ENCODE measurements at regions of chr17 and their contacts with region 1.

Region 1: DNA sequence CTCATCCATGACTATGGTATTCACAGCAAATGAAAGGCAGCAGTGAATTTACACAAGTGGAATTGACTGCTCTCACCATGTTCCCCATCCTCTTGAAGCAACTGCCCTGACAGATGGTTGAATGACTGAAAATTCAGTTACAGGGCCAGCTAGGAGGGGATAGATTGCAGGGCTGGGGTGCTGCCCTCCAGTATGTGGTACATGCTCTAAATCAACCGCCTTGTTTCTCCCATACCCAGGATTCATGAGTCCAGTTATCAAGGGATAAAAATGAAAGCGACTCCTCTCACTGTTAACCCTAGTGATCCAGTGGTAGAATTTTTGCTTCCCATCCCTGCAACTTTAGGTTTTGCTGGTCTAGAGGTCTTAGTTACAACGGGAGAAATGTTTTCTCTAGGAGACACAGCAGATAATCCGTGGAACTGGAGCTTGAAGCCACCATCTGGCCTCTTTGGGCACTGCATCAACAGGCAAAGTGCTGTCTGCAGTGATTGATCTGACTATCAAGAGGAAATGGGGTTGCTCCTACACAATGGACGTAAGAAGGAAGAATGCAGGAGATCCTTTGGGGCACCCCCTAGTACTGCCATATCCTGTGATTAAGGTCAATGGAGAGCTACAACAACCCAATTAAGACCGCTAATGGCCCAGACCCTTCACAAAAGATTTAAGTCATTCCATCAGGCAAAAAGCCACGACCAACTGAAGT is 32.0 kb downstream of the SCPEP1 start:
- DNase-seq: peak; percentile 19 to 61
- ATAC-seq: peak in 3 of 4 donors; percentile 67 to 88 (median 75)
- H3K4me3 ChIP-seq: no peak overlapping the region
- H3K27ac ChIP-seq: no peak overlapping the region
- H3K4me1 ChIP-seq: no peaks in the 10 kb centered on the region
- H3K27me3 ChIP-seq: no peaks in the 10 kb centered on the region
- CTCF ChIP-seq: peak; percentile 67

Region 2: GRCh38 chr17:57044976-57045867 is 35.3 kb after region 1 on chr17:
- intact Hi-C with region 1: loop called (anchors 5 kb)
- DNase-seq: peak in 1 of 2 donors; percentile 52
- ATAC-seq: peak; percentile 14 to 60 (median 22)
- H3K4me3 ChIP-seq: peak overlapping the region; percentile 62
- H3K27ac ChIP-seq: no peak overlapping the region
- H3K4me1 ChIP-seq: peaks cover 4% of the 10 kb centered on the region
- H3K27me3 ChIP-seq: peaks cover 0 to 10% (median 0%) of the 10 kb centered on the region in 3 donors
- CTCF ChIP-seq: no peak

Region 3: DNA sequence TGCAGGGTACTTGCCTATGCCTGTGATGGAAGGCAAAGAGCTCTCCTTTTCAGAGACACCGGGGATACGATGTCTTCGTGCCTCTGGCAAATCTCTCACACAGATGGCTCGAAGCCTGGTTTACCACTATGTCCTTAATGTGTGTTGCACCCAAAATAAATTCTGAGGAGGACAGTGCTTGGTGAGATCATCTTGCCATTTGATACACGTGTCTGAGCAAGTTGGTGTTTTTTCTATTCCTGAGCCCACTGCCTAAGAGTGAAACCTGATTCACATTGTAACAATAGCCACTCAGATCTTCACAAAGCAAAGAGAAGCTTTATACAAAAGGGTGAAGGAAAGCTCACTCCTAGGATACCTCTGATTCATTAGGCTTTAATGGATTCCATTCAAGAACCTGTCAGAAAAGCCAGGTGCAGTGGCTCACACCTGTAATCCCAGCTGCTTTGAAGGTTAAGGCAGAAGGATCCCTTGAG is 42.0 kb after region 1 on chr17:
- intact Hi-C with region 1: loop called in 1 of 2 experiments (anchors 5 kb)
- DNase-seq: peak in 1 of 2 donors; percentile 72
- ATAC-seq: peak; percentile 90 to 92 (median 92)
- H3K4me3 ChIP-seq: no peak overlapping the region
- H3K27ac ChIP-seq: peak overlapping the region; percentile 82
- H3K4me1 ChIP-seq: peaks cover 29% of the 10 kb centered on the region
- H3K27me3 ChIP-seq: no peaks in the 10 kb centered on the region
- CTCF ChIP-seq: no peak

Region 4: GRCh38 chr17:57084802-57085447 is 75.0 kb after region 1 on chr17 and contains the start of gene AKAP1:
- intact Hi-C with region 1: no loop called
- DNase-seq: peak; percentile 97 to 98
- ATAC-seq: peak; percentile 92 to 96 (median 92)
- H3K4me3 ChIP-seq: peak within 1 kb of the TSS; percentile 80
- H3K27ac ChIP-seq: peak within 1 kb of the TSS; percentile 95
- H3K4me1 ChIP-seq: peaks cover 37% of the 10 kb centered on the region
- H3K27me3 ChIP-seq: no peaks in the 10 kb centered on the region
- CTCF ChIP-seq: peak; percentile 21
- total RNA-seq, gene AKAP1: 86.0 to 231 (median 105) TPM

Region 5: DNA sequence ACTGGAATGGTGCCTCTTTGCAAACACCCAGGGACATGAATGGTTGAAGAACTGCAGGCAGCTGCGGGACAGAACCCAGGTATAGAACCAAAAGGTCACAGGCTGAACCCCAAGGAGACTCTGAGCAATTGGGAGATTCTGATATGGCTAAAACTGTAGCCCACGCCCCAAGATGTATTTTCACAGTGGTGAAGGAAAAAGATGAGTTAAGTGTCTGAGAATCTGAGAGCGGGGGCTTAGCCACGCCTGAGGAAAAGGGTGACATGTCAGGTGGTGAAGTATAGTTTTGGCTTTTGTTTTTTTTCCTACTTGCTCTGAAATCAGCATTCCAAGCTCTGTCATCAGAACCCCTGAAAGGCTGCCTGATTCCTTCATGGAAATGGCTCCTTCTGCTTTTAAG is 148.4 kb after region 1 on chr17:
- intact Hi-C with region 1: no loop called
- DNase-seq: no peak
- ATAC-seq: no peak
- H3K4me3 ChIP-seq: no peak overlapping the region
- H3K27ac ChIP-seq: no peak overlapping the region
- H3K4me1 ChIP-seq: no peaks in the 10 kb centered on the region
- H3K27me3 ChIP-seq: no peaks in the 10 kb centered on the region
- CTCF ChIP-seq: no peak